Right ventricle myocardium inferior (tissue), 1 donor: ENCODE measurements at regions of chr13 and their contacts with region 1.

Region 1: DNA sequence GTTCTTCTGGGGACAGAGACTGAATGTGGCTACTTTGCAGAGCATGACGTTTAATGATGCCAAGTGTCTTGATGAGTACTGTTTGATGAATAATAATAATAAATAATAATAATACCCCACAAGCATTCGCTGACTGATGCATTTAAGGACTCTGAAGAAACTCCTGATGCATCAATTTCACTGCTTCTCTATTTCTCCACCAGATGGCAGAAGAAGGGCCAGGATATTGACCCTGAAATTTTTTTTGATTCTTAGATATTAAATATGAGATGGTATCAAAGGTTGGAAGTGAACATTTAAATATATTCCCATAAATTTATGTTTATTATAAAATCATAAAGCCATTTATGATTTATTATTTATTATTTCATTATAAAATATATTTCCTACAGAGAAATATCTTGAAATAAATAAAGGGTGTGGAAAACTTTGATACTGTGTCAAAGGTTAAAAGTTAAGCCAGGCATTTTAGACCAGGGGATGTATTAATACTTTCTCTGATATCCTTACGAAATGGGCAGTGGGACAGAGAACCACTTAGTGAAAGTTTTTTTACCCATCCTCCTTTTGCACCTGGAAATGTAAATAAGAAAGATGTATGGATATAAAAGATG is 170.9 kb downstream of the LACC1 start:
- DNase-seq: no peak
- ATAC-seq: no peak

Region 2: DNA sequence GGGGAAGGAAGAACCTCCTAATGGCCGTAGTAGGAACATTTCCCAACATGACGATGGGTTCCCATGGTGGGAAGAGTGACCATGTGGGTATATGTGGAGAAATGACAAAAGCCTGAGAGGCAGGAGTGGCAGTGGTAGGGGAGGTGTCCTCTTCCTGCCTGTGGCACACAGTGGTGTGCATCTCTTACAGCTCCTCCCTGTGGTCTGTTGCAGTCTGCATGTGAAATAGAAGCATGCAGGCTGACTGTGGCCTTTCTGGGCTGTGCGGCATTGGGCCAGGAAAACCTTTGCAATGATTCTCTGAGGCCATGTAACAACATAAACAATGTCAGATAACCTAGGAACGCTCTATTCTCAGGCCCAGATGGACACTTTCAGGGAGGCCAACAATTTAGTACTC is 86.8 kb before region 1 on chr13:
- intact Hi-C with region 1: no loop called
- DNase-seq: no peak
- ATAC-seq: no peak

Region 3: DNA sequence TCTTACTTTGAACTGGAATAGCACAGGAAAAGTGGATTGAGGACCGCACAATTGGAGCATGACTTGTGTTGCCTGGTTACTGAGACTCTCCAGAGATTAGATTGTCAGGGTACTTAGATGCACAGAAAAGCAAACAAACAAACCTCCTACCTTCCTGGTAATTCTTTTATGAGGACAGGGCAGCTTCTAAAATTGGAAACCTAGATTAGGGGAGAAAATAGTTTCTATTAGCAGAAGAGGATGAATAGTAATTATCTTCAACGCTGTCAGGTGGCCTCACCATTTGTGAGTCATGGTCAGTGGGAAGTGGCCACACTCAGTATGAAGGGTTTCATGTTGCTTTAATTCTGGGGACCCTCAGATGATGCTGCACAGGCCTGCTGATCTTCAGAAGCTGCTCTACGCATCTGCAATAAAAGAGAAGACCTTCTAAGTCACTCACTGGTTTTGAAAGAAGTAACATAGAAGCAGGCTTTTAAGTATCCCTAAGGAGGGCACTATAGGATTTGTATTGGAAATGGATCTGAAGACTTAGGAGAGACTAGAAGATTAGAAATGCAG is 64.1 kb before region 1 on chr13:
- intact Hi-C with region 1: loop called (anchors 2 kb)
- DNase-seq: no peak
- ATAC-seq: peak; percentile 89

Region 4: GRCh38 chr13:44004878-44005277 is 45.7 kb before region 1 on chr13:
- intact Hi-C with region 1: no loop called
- DNase-seq: no peak
- ATAC-seq: no peak

Region 5: GRCh38 chr13:44132710-44133109 is 82.2 kb after region 1 on chr13:
- intact Hi-C with region 1: loop called (anchors 2 kb)
- DNase-seq: peak; percentile 85
- ATAC-seq: peak; percentile 92

Region 6: GRCh38 chr13:44243198-44243857 is 192.8 kb after region 1 on chr13:
- intact Hi-C with region 1: loop called (anchors 10 kb)
- DNase-seq: no peak
- ATAC-seq: no peak